ENCODE measurements at regions of chr15 and their contacts with region 1.

Region 1: DNA sequence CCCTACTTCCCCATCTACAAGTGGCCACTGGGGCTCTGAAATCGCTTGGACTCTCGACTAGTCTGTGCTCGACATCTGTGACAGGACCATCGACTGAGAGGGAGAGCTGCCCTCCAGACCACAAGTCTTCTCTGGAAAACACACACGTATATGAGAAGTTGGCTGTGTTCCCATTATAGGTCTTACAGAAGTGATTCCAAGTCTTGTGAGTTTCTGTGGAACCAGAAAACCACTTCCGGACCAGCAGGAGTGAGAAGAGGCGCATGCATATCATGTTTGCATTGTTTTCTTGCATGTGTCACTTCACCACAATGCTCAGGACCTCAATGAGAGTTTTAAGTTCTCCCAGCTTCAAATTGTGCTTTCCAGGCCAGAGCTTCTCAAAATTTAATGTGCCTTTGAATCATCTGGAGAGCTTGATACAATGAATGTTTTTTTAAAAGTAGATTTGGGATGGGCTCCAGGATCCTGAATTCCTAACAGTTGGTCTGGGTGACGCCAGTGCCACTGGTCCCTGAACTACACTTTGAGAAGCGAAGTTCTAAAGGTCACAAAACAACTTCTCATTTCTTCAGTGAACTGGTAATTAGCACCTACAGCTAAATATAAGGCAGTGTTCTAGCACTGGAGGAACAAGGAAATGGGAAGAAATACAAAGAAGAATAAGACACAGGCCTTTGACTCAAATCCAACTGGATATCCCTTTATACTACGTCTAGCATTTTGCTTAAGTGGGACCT is 15.7 kb downstream of the LIPC start:
- DNase-seq: no peak
- ATAC-seq: peak; percentile 40
- H3K4me3 ChIP-seq: no peak overlapping the region
- H3K4me3 Mint-ChIP-seq: peak overlapping the region in 2 of 10 donors; percentile 20 to 27
- H3K27ac ChIP-seq: no peak overlapping the region
- H3K27ac Mint-ChIP-seq: peak overlapping the region in 3 of 9 donors; percentile 5 to 77 (median 46)
- H3K4me1 ChIP-seq: no peaks in the 10 kb centered on the region
- H3K4me1 Mint-ChIP-seq: peaks cover 0 to 25% (median 14%) of the 10 kb centered on the region in 7 donors
- H3K27me3 ChIP-seq: no peaks in the 10 kb centered on the region
- H3K27me3 Mint-ChIP-seq: no peaks in the 10 kb centered on the region

Region 2: DNA sequence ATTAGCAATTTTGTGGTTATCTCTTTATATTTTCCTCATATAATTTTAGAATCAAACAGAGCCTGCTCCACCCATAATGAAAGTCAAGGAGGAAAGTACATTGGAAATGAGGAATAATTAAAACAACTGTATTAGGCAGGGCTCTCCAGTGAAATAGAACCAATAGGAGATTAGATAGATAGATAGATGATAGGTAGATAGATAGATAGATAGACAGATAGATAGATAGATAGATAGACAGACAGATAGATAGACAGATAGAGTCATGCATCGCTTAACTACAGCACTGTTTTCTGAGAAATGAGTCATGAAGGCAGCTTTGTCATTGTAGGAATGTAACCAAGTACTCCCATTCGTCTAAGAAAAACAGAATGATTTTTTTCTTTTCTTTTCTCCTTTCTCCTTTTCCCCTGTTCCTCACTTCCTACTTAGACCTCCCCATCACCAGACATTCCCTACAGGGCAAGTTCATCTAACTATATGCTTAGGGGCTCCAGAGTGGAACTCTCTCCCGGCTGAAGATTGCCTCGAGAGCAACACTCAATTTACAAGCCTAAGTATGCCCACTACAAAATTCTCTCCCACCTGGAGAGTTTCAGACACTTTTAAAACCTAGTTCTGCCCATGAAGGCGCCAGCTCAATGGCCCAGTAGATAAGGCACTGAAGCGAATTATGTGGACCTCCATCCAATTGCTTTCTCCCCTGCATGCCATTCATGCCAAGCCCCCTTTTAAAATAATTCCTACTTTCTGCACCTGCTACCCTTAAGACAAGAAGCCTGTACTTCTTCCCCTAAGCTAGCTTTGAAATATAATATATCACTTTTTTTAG is 69.0 kb before region 1 on chr15:
- CTCF ChIA-PET with region 1: no interaction called
- POLR2A ChIA-PET with region 1: no interaction called
- intact Hi-C with region 1: no loop called
- DNase-seq: no peak
- ATAC-seq: no peak
- H3K4me3 ChIP-seq: no peak overlapping the region
- H3K4me3 Mint-ChIP-seq: no peak overlapping the region
- H3K27ac ChIP-seq: no peak overlapping the region
- H3K27ac Mint-ChIP-seq: peak overlapping the region in 1 of 9 donors; percentile 53
- H3K4me1 ChIP-seq: no peaks in the 10 kb centered on the region
- H3K4me1 Mint-ChIP-seq: peaks cover 0 to 16% (median 0%) of the 10 kb centered on the region in 7 donors
- H3K27me3 ChIP-seq: no peaks in the 10 kb centered on the region
- H3K27me3 Mint-ChIP-seq: peaks cover 0 to 7% (median 0%) of the 10 kb centered on the region in 5 donors

Region 3: DNA sequence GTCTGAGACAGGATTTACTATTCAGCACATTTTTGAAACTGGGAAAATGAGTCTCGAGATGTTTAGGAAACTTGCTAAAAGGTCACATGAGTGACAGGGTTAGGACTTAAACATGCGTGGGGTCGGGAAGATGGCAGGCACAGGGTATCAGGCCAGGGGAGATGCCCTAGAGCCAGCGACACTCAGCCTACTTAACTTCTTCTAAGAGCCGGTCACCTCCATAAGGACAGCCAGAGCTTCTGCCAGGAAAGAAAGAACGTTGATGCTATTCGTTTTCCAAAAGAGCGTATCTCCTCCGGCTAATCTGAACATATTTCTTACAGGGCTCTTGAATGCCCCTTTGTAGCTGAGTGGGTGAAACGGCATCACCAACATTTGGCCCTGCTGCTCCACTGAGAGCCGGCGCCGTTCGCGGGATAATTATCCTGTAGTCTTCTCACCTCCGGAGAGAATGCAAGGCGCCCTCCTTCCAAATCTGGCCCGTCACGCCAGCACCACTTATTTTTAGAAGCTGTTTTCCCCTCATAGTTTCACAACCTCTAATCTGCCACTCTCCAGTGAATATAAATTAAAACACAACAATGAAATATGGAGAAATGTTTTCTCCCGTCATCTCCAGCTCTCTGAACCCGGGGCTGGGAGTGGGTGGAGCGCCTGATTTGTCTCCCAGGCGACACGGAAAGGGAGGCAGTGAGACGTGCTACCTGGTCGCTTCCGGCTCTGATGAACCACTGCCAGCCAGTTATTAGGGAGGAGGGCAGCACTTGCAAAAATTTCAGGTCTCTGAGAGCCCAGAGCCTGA is 42.8 kb after region 1 on chr15:
- CTCF ChIA-PET with region 1: no interaction called
- POLR2A ChIA-PET with region 1: no interaction called
- intact Hi-C with region 1: loop called in 1 of 2 experiments (anchors 5 kb)
- DNase-seq: no peak
- ATAC-seq: no peak
- H3K4me3 ChIP-seq: no peak overlapping the region
- H3K4me3 Mint-ChIP-seq: no peak overlapping the region
- H3K27ac ChIP-seq: no peak overlapping the region
- H3K27ac Mint-ChIP-seq: no peak overlapping the region
- H3K4me1 ChIP-seq: peaks cover 26% of the 10 kb centered on the region in 2 donors
- H3K4me1 Mint-ChIP-seq: peaks cover 16 to 47% (median 37%) of the 10 kb centered on the region in 7 donors
- H3K27me3 ChIP-seq: no peaks in the 10 kb centered on the region
- H3K27me3 Mint-ChIP-seq: no peaks in the 10 kb centered on the region